Transverse colon (tissue), 4 donors: ENCODE measurements at regions of chr10 and their contacts with region 1.

Region 1: DNA sequence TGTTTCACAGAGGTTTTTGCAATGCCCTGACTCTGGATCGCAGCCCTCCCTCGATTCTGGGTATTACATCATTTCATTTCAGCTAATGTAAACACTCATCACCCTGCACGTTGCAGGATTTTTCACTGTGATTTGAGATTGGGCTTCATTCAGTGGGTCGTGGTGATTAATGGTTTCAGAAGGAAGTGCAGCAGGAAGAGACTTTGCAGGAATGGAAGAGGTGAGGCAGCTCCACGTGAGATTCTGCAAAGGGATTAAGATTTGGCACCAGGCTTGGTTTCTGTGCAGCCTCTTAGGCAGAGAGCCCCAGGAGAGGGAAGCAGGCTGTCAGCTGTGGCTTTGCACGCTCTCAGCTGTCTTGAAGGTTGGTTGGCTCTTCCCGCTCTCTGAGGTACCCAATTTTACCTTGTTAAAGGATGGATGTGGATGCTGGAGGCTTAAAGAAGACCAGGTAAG is 95.2 kb downstream of the PLCE1 start:
- DNase-seq: no peak
- H3K4me3 ChIP-seq: peak overlapping the region in 1 of 4 donors; percentile 11
- H3K27ac ChIP-seq: peak overlapping the region in 1 of 4 donors; percentile 44
- H3K4me1 ChIP-seq: peaks cover 0 to 26% (median 4%) of the 10 kb centered on the region in 4 donors
- H3K27me3 ChIP-seq: no peaks in the 10 kb centered on the region
- CTCF ChIP-seq: no peak
- EP300 ChIP-seq: no peak
- POLR2A ChIP-seq: no peak

Region 2: DNA sequence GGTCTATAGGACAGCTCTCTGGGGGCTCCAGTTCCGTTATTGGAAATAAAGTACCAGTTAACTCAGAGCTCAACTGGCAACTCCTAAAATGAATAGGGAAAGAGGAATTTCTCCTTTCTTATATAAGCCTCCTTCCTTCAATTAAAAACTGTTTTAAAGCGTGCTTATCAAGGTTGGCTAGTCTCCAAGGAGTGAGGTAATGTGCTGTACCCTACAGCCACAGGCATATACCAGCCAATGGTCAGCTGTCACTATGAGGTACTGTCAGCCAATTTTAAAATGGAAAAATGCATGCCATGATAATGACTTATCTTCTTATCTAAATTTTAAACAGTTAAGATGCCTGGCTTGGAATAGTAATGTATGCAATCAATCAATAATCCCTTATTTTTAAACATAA is 19.1 kb before region 1 on chr10:
- in situ Hi-C with region 1: no loop called
- intact Hi-C with region 1: loop called (anchors 1 kb)
- DNase-seq: no peak
- H3K4me3 ChIP-seq: no peak overlapping the region
- H3K27ac ChIP-seq: no peak overlapping the region
- H3K4me1 ChIP-seq: peaks cover 0 to 12% (median 8%) of the 10 kb centered on the region in 4 donors
- H3K27me3 ChIP-seq: no peaks in the 10 kb centered on the region
- CTCF ChIP-seq: no peak
- EP300 ChIP-seq: no peak
- POLR2A ChIP-seq: no peak

Region 3: GRCh38 chr10:94125856-94126255 is 36.9 kb after region 1 on chr10:
- in situ Hi-C with region 1: no loop called
- intact Hi-C with region 1: loop called (anchors 1 kb)
- DNase-seq: no peak
- H3K4me3 ChIP-seq: no peak overlapping the region
- H3K27ac ChIP-seq: peak overlapping the region in 2 of 4 donors; percentile 25 to 42
- H3K4me1 ChIP-seq: peaks cover 8 to 30% (median 14%) of the 10 kb centered on the region in 4 donors
- H3K27me3 ChIP-seq: no peaks in the 10 kb centered on the region
- CTCF ChIP-seq: no peak
- EP300 ChIP-seq: no peak
- POLR2A ChIP-seq: no peak

Region 4: GRCh38 chr10:94757916-94758315 is 669.0 kb after region 1 on chr10:
- in situ Hi-C with region 1: no loop called
- intact Hi-C with region 1: no loop called
- DNase-seq: no peak
- H3K4me3 ChIP-seq: no peak overlapping the region
- H3K27ac ChIP-seq: no peak overlapping the region
- H3K4me1 ChIP-seq: no peaks in the 10 kb centered on the region
- H3K27me3 ChIP-seq: no peaks in the 10 kb centered on the region
- CTCF ChIP-seq: no peak
- EP300 ChIP-seq: no peak
- POLR2A ChIP-seq: no peak